GM12878 (cell line): ENCODE measurements at regions of chr4 and their contacts with region 1.

Region 1: GRCh38 chr4:27684610-27685011 is 824.0 kb downstream of the STIM2 start:
- DNase-seq: no peak
- ATAC-seq: peak; percentile 98
- H3K4me3 ChIP-seq: no peak overlapping the region
- H3K27ac ChIP-seq: no peak overlapping the region
- H3K4me1 ChIP-seq: no peaks in the 10 kb centered on the region
- H3K27me3 ChIP-seq: no peaks in the 10 kb centered on the region
- CTCF ChIP-seq: peak; percentile 70 to 79 (median 70)
- EP300 ChIP-seq: no peak
- POLR2A ChIP-seq: no peak
- RAD21 ChIP-seq: peak; percentile 75

Region 2: DNA sequence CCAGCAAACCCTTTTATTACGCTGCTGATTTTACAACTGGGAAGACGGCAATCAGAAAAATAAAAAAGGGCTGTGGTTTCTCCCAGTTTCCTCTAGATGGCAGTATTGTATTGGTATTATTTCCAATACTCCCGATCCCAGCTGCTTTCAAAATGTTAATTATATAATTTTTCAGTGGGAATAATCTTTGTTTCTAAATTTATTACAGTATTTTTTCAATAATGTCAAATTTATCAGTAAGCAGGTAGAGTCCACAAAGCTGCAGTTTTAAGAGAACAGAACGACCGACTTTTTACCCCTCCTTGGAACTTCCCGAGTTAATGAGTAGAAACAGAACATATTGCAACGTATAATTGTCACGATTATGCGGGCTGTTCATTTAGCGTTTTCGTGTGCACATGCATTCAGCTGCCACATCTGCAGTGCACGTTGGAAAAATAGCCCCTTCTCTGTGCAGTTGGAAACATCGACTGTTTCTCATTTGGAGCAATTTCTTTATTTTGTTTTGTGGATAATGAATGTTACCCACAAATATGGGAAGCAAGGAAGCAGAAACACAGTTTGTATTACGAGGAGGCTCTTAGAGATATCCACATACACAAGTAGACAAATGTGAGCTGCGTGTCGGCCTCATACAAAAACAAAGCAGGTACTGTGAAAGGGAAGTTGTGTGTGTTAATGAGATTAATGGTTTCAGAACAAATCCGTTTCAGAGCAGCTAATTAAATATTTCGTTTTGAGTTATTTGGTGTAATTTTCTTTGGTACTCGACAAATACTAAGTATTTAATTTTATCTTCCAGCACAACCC is 636.0 kb before region 1 on chr4:
- CTCF ChIA-PET with region 1: interaction called, 8 read pairs
- POLR2A ChIA-PET with region 1: no interaction called
- RAD21 ChIA-PET with region 1: interaction called, 16 read pairs
- SMC1A ChIA-PET with region 1: interaction called, 4 read pairs
- in situ Hi-C with region 1: no loop called
- intact Hi-C with region 1: loop called (anchors 10 kb)
- DNase-seq: no peak
- ATAC-seq: peak; percentile 67
- H3K4me3 ChIP-seq: no peak overlapping the region
- H3K27ac ChIP-seq: no peak overlapping the region
- H3K4me1 ChIP-seq: no peaks in the 10 kb centered on the region
- H3K27me3 ChIP-seq: peaks cover 0 to 2% of the 10 kb centered on the region in 2 experiments; a peak in 3 of 4 replicates
- CTCF ChIP-seq: peak; percentile 52 to 69 (median 56)
- EP300 ChIP-seq: no peak
- POLR2A ChIP-seq: no peak
- RAD21 ChIP-seq: peak; percentile 72

Region 3: GRCh38 chr4:27138201-27138600 is 546.4 kb before region 1 on chr4:
- CTCF ChIA-PET with region 1: no interaction called
- POLR2A ChIA-PET with region 1: no interaction called
- RAD21 ChIA-PET with region 1: no interaction called
- SMC1A ChIA-PET with region 1: no interaction called
- in situ Hi-C with region 1: no loop called
- intact Hi-C with region 1: no loop called
- DNase-seq: no peak
- ATAC-seq: no peak
- H3K4me3 ChIP-seq: no peak overlapping the region
- H3K27ac ChIP-seq: no peak overlapping the region
- H3K4me1 ChIP-seq: no peaks in the 10 kb centered on the region
- H3K27me3 ChIP-seq: no peaks in the 10 kb centered on the region
- CTCF ChIP-seq: no peak
- EP300 ChIP-seq: no peak
- POLR2A ChIP-seq: no peak
- RAD21 ChIP-seq: no peak

Region 4: GRCh38 chr4:27357283-27357682 is 327.3 kb before region 1 on chr4:
- CTCF ChIA-PET with region 1: no interaction called
- POLR2A ChIA-PET with region 1: no interaction called
- RAD21 ChIA-PET with region 1: no interaction called
- SMC1A ChIA-PET with region 1: no interaction called
- in situ Hi-C with region 1: no loop called
- intact Hi-C with region 1: no loop called
- DNase-seq: no peak
- ATAC-seq: peak; percentile 36; the same call in 2 of the 3 replicates
- H3K4me3 ChIP-seq: no peak overlapping the region
- H3K27ac ChIP-seq: no peak overlapping the region
- H3K4me1 ChIP-seq: no peaks in the 10 kb centered on the region
- H3K27me3 ChIP-seq: no peaks in the 10 kb centered on the region
- CTCF ChIP-seq: no peak; a peak in 1 of 6 replicates
- EP300 ChIP-seq: no peak
- POLR2A ChIP-seq: no peak
- RAD21 ChIP-seq: no peak

Region 5: GRCh38 chr4:27666943-27667342 is 17.7 kb before region 1 on chr4:
- CTCF ChIA-PET with region 1: interaction called, 3 read pairs
- POLR2A ChIA-PET with region 1: no interaction called
- RAD21 ChIA-PET with region 1: interaction called, 10 read pairs
- SMC1A ChIA-PET with region 1: interaction called, 11 read pairs
- in situ Hi-C with region 1: no loop called
- intact Hi-C with region 1: no loop called
- DNase-seq: no peak
- ATAC-seq: peak; percentile 36; the same call in 1 of the 3 replicates
- H3K4me3 ChIP-seq: no peak overlapping the region
- H3K27ac ChIP-seq: no peak overlapping the region
- H3K4me1 ChIP-seq: no peaks in the 10 kb centered on the region
- H3K27me3 ChIP-seq: no peaks in the 10 kb centered on the region
- CTCF ChIP-seq: no peak; a peak in 1 of 6 replicates
- EP300 ChIP-seq: no peak
- POLR2A ChIP-seq: no peak
- RAD21 ChIP-seq: no peak

Region 6: GRCh38 chr4:27702730-27703431 is 18.3 kb after region 1 on chr4:
- CTCF ChIA-PET with region 1: interaction called, 19 read pairs
- POLR2A ChIA-PET with region 1: no interaction called
- RAD21 ChIA-PET with region 1: interaction called, 8 read pairs
- SMC1A ChIA-PET with region 1: interaction called, 4 read pairs
- in situ Hi-C with region 1: no loop called
- intact Hi-C with region 1: no loop called
- DNase-seq: no peak
- ATAC-seq: peak; percentile 80
- H3K4me3 ChIP-seq: no peak overlapping the region
- H3K27ac ChIP-seq: no peak overlapping the region
- H3K4me1 ChIP-seq: no peaks in the 10 kb centered on the region
- H3K27me3 ChIP-seq: no peaks in the 10 kb centered on the region
- CTCF ChIP-seq: peak; percentile 10 to 52 (median 36); a peak in 3 of 6 replicates
- EP300 ChIP-seq: no peak
- POLR2A ChIP-seq: no peak
- RAD21 ChIP-seq: peak; percentile 36